ENCODE measurements at regions of chr19 and their contacts with region 1.

Region 1: DNA sequence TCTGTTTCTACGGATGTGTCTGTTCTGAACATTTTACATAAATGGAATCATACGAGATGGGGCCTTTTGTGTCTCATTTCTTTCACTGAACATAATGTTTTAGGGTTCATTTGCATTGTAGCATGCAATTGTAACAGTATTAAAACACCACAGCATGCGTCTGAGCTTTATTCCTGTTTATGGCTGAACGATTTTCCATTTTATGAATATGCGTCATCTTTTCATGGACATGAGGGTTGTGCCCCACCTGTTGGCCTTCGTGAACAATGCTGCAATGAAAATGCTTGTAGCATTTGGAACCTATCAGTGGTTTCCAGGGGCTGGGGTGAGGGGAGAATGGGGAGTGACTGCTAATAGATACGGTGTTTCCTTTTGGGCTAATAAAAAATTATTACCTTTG is 5.1 kb downstream of the OR10H1 start:
- DNase-seq: no peak
- ATAC-seq: no peak
- H3K4me3 ChIP-seq: no peak overlapping the region
- H3K4me3 Mint-ChIP-seq: no peak overlapping the region
- H3K27ac ChIP-seq: no peak overlapping the region
- H3K27ac Mint-ChIP-seq: no peak overlapping the region
- H3K4me1 ChIP-seq: peaks cover 7% of the 10 kb centered on the region
- H3K4me1 Mint-ChIP-seq: peaks cover 11% of the 10 kb centered on the region
- H3K27me3 ChIP-seq: peaks cover 0 to 4% of the 10 kb centered on the region in 2 experiments
- H3K27me3 Mint-ChIP-seq: peaks cover 15% of the 10 kb centered on the region
- CTCF ChIP-seq: no peak

Region 2: GRCh38 chr19:15790096-15790495 is 20.2 kb before region 1 on chr19:
- CTCF ChIA-PET with region 1: no interaction called
- POLR2A ChIA-PET with region 1: no interaction called
- intact Hi-C with region 1: no loop called
- DNase-seq: no peak
- ATAC-seq: no peak
- H3K4me3 ChIP-seq: no peak overlapping the region
- H3K4me3 Mint-ChIP-seq: no peak overlapping the region
- H3K27ac ChIP-seq: no peak overlapping the region
- H3K27ac Mint-ChIP-seq: no peak overlapping the region
- H3K4me1 ChIP-seq: no peaks in the 10 kb centered on the region
- H3K4me1 Mint-ChIP-seq: no peaks in the 10 kb centered on the region
- H3K27me3 ChIP-seq: peaks cover 0 to 4% of the 10 kb centered on the region in 2 experiments
- H3K27me3 Mint-ChIP-seq: peaks cover 14% of the 10 kb centered on the region
- CTCF ChIP-seq: no peak

Region 3: DNA sequence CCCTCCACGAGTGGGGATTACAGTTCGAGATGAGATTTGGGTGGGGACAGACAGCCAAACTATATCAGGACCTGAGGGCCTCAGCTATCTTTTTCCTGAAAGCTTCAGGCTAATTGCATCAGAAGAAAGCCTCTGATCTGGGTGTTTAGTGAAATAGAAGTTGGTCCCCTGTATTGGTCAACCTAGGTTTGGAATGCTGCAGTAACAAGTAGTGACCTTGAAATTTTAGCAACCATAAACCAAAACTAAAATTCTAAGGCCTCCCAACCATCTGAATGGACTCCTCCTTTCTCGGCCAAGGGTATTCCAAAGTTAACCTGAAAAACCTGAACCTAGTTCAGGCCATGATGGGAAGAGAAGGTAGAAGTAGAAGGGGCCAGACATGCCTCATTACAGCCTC is 40.0 kb after region 1 on chr19:
- CTCF ChIA-PET with region 1: interaction called, 4 read pairs
- POLR2A ChIA-PET with region 1: no interaction called
- intact Hi-C with region 1: loop called in 1 of 2 experiments (anchors 5 kb)
- DNase-seq: no peak
- ATAC-seq: no peak
- H3K4me3 ChIP-seq: no peak overlapping the region
- H3K4me3 Mint-ChIP-seq: no peak overlapping the region
- H3K27ac ChIP-seq: no peak overlapping the region
- H3K27ac Mint-ChIP-seq: no peak overlapping the region
- H3K4me1 ChIP-seq: peaks cover 5% of the 10 kb centered on the region
- H3K4me1 Mint-ChIP-seq: peaks cover 13% of the 10 kb centered on the region
- H3K27me3 ChIP-seq: peaks cover 0 to 3% of the 10 kb centered on the region in 2 experiments
- H3K27me3 Mint-ChIP-seq: no peaks in the 10 kb centered on the region
- CTCF ChIP-seq: no peak

Region 4: DNA sequence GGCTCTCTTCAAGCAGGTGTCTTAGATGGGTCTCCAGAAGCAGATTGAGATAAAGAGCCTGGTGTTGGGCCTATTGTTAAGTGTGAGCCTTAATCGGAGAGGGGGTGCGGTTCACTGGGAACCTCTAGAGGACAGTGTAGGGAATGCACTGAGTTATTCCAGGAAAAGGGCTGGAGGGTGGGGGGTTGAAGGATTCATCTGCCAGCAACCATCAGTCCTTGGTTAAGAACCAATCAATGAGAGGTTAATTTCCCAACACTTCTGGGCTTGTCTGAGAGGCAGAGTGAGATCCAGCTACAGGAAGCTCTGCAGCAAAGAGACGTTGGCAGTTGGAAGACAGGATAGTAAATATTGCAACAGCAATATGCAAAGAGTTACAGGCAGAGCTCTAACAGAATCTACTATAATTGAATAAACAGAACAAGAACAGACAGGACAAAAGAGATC is 58.8 kb after region 1 on chr19:
- CTCF ChIA-PET with region 1: interaction called, 16 read pairs
- POLR2A ChIA-PET with region 1: interaction called, 3 read pairs
- intact Hi-C with region 1: loop called (anchors 1 to 5 kb)
- DNase-seq: peak in 8 of 9 experiments; percentile 7 to 73 (median 44)
- ATAC-seq: peak; percentile 74
- H3K4me3 ChIP-seq: no peak overlapping the region
- H3K4me3 Mint-ChIP-seq: no peak overlapping the region
- H3K27ac ChIP-seq: no peak overlapping the region
- H3K27ac Mint-ChIP-seq: no peak overlapping the region
- H3K4me1 ChIP-seq: peaks cover 8% of the 10 kb centered on the region
- H3K4me1 Mint-ChIP-seq: peaks cover 22% of the 10 kb centered on the region
- H3K27me3 ChIP-seq: peaks cover 0 to 2% of the 10 kb centered on the region in 2 experiments
- H3K27me3 Mint-ChIP-seq: peaks cover 6% of the 10 kb centered on the region
- CTCF ChIP-seq: peak; percentile 60